A673 (cell line): ENCODE measurements at regions of chr9 and their contacts with region 1.

Region 1: GRCh38 chr9:91422758-91423711 is 597 bp downstream of the NFIL3 start:
- DNase-seq: peak; percentile 82
- H3K4me3 ChIP-seq: peak overlapping the region; percentile 83
- H3K27ac ChIP-seq: peak overlapping the region; percentile 74
- H3K4me1 ChIP-seq: peaks cover 32% of the 10 kb centered on the region
- H3K27me3 ChIP-seq: no peaks in the 10 kb centered on the region
- CTCF ChIP-seq: peak; percentile 35; the same call in 1 of the 2 replicates

Region 2: GRCh38 chr9:91036826-91037510 is 386.1 kb before region 1 on chr9:
- CTCF ChIA-PET with region 1: interaction called, 3 read pairs
- POLR2A ChIA-PET with region 1: no interaction called
- intact Hi-C with region 1: loop called (anchors 1 kb)
- DNase-seq: peak; percentile 69
- H3K4me3 ChIP-seq: no peak overlapping the region
- H3K27ac ChIP-seq: no peak overlapping the region
- H3K4me1 ChIP-seq: no peaks in the 10 kb centered on the region
- H3K27me3 ChIP-seq: no peaks in the 10 kb centered on the region
- CTCF ChIP-seq: peak; percentile 53

Region 3: DNA sequence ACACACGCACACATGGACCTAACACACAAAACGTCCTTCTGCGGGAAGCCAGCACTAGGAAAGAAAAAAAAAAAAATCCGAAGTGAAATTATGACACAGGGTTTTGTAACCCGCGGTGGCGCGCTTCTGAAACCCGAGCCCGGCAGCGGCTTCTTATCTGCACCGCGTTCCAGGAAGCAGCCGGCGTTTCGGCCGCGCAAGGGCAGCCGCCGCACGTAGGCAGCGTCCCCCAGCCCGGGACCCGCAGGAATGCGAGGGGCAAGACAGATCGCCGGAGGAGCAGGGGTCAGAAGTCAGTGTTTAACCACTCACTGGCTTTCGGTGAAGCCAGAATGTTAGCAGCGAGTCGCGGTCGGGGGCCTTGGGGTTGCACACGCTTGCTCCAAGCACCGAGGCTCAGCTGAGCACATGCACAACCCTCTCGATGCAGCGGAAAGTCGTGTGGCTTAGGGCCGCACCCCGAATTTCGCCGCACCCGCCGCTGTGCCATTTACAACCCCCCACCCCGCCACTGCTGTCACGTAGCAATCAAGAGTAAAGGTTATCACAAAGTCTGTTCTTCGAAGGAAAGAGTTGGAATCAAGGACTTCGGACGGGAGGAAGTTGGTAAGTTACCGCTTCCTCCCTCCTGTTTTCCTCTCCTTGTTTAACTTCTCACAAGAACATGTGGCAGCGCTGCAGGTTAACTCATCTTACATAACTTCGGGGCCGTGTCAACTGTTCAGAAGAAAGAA is 229.2 kb before region 1 on chr9:
- CTCF ChIA-PET with region 1: no interaction called
- POLR2A ChIA-PET with region 1: no interaction called
- intact Hi-C with region 1: loop called (anchors 10 kb)
- DNase-seq: peak; percentile 75
- H3K4me3 ChIP-seq: peak overlapping the region; percentile 47
- H3K27ac ChIP-seq: peak overlapping the region; percentile 76
- H3K4me1 ChIP-seq: peaks cover 33% of the 10 kb centered on the region
- H3K27me3 ChIP-seq: no peaks in the 10 kb centered on the region
- CTCF ChIP-seq: no peak; the same call in 1 of the 2 replicates

Region 4: DNA sequence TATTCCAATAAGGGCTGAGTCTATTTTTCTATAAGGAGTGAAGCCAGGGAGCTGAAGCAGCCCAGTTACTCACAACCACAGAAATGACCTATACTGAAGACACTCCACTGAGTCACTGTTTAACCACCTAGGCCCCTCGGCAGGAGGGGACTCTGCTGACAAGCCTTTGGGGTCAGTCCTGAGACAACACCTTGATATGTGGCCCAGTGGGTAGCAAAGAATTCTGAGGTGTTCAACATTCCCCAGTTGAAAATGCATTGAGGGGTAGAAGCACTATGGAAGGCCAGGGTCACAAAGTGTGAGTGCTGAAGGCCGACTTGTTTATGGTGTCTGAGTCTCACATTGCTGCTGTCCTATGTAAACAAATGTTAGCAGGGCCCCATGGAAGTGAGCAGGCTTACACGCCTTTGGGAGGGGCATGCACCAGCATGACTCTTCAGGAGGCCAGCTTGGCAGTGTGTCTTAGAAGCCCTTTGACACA is 113.2 kb after region 1 on chr9:
- CTCF ChIA-PET with region 1: no interaction called
- POLR2A ChIA-PET with region 1: no interaction called
- intact Hi-C with region 1: no loop called
- DNase-seq: no peak
- H3K4me3 ChIP-seq: no peak overlapping the region
- H3K27ac ChIP-seq: no peak overlapping the region
- H3K4me1 ChIP-seq: no peaks in the 10 kb centered on the region
- H3K27me3 ChIP-seq: no peaks in the 10 kb centered on the region
- CTCF ChIP-seq: no peak

Region 5: GRCh38 chr9:91681461-91682305 is 258.6 kb after region 1 on chr9:
- CTCF ChIA-PET with region 1: no interaction called
- POLR2A ChIA-PET with region 1: no interaction called
- intact Hi-C with region 1: loop called (anchors 2 kb)
- DNase-seq: peak; percentile 87
- H3K4me3 ChIP-seq: no peak overlapping the region
- H3K27ac ChIP-seq: no peak overlapping the region
- H3K4me1 ChIP-seq: peaks cover 8% of the 10 kb centered on the region
- H3K27me3 ChIP-seq: no peaks in the 10 kb centered on the region
- CTCF ChIP-seq: peak; percentile 97